B cell (primary cell): ENCODE measurements at regions of chr10 and their contacts with region 1.

Region 1: DNA sequence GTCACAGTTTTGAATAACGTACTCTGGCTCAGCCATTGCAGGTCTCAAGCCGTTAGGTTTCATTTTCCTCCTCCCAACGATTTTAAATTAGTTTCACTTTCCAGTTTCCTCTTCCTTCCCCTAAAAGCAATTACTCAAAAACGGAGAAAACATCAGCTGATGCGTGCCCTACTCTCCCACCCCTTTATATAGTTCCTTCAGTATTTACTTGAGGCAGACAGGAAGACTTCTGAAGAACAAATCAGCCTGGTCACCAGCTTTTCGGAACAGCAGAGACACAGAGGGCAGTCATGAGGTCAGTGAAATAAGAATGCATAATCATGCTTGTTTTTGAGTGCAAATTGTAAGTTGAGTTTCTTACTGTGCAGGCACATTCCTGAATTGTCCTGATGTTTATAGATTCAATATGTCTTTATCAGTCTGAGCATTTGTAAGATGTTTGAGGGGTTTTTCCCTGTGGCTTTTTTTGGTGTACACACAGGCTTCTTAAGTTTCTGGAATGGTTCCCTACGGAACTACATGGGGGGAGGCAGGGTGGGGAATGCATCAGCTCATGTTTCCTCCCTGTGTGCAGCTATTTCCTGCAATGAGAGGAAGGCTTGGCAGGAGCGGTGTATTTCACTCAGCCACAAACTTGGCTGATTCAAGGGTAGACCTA is at the start of gene IFIT3:
- DNase-seq: peak; percentile 65
- ATAC-seq: peak; percentile 31
- H3K4me3 ChIP-seq: peak within 1 kb of the TSS; percentile 40 to 83 (median 55)
- H3K4me3 Mint-ChIP-seq: peak within 1 kb of the TSS; percentile 88
- H3K27ac ChIP-seq: peak within 1 kb of the TSS; percentile 56 to 72
- H3K27ac Mint-ChIP-seq: peak within 1 kb of the TSS; percentile 87
- H3K4me1 ChIP-seq: peaks cover 33 to 51% of the 10 kb centered on the region in 2 donors
- H3K4me1 Mint-ChIP-seq: peaks cover 44% of the 10 kb centered on the region
- H3K27me3 ChIP-seq: no peaks in the 10 kb centered on the region
- H3K27me3 Mint-ChIP-seq: no peaks in the 10 kb centered on the region
- CTCF ChIP-seq: no peak
- total RNA-seq, gene IFIT3: 4.0 and 4.2 TPM in 2 replicates

Region 2: DNA sequence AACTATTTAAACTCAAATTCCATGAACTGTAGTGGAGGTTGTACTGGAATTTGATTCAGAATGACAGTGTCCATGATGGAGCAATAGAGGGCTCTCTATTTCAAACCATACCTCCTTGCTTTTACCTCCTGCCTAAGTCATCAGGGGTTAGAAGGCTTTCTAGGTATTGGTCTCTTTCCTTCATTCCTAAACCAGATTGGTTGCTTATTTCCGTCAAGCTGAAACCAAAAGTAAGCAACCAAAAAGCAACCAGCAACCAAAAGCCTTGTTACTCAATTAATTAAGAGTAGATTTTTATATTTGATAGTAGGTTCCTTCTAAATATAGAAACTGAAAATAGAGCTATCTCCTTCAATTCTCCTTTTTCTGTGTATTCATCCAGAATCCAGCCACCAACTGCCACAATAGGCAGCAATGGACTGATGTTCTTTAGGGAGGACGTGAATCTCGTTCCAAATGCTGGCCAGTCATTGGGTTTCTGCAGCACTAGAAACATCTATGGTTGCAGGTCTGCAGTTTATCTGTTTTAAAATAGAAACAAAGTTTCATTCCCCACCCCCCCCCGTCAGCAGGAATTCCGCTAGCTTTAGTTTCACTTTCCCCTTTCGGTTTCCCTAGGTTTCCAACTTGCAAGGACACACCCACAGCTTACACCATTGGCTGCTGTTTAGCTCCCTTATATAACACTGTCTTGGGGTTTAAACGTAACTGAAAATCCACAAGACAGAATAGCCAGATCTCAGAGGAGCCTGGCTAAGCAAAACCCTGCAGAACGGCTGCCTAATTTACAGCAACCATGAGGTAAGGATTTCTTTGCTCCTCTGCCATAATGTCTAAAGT is 64.2 kb after region 1 on chr10 and contains the start of gene IFIT1:
- CTCF ChIA-PET with region 1: no interaction called
- POLR2A ChIA-PET with region 1: no interaction called
- intact Hi-C with region 1: loop called (anchors 1 kb)
- DNase-seq: peak; percentile 78
- ATAC-seq: peak; percentile 87
- H3K4me3 ChIP-seq: peak within 1 kb of the TSS; percentile 59 to 94 (median 64)
- H3K4me3 Mint-ChIP-seq: peak within 1 kb of the TSS; percentile 93
- H3K27ac ChIP-seq: peak within 1 kb of the TSS; percentile 59 to 71
- H3K27ac Mint-ChIP-seq: peak within 1 kb of the TSS; percentile 81
- H3K4me1 ChIP-seq: peaks cover 19 to 20% of the 10 kb centered on the region in 2 donors
- H3K4me1 Mint-ChIP-seq: peaks cover 28% of the 10 kb centered on the region
- H3K27me3 ChIP-seq: no peaks in the 10 kb centered on the region
- H3K27me3 Mint-ChIP-seq: no peaks in the 10 kb centered on the region
- CTCF ChIP-seq: no peak
- total RNA-seq, gene IFIT1: 1.2 and 1.4 TPM in 2 replicates